ENCODE measurements at regions of chr4 and their contacts with region 1.

Region 1: GRCh38 chr4:73653695-73654106 is 33.5 kb upstream of the RASSF6 start:
- DNase-seq: no peak
- H3K4me3 ChIP-seq: no peak overlapping the region
- H3K27ac ChIP-seq: no peak overlapping the region
- H3K4me1 ChIP-seq: peaks cover 0 to 5% (median 0%) of the 10 kb centered on the region in 4 donors
- H3K27me3 ChIP-seq: no peaks in the 10 kb centered on the region
- CTCF ChIP-seq: peak; percentile 48 to 62 (median 56)
- EP300 ChIP-seq: no peak
- POLR2A ChIP-seq: no peak

Region 2: DNA sequence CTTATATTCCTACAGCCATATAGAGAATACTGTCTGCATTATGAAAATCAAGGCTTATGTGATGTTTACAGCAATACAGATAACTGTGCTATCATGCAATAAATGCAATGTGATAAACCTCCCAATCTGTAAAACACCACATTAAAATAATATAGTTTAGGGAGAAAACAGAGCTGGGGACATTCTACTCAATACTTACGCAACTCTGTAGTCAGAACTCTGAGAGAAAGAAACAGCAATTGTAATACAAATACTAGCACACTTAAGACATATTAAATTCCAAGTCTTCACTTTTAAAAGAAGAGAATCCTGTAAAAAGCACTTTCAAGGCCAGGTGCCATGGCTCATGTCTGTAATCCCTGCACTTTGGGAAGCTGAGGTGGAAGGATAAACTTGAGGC is 456.5 kb before region 1 on chr4:
- intact Hi-C with region 1: no loop called
- DNase-seq: no peak
- H3K4me3 ChIP-seq: no peak overlapping the region
- H3K27ac ChIP-seq: no peak overlapping the region
- H3K4me1 ChIP-seq: peaks cover 0 to 45% (median 31%) of the 10 kb centered on the region in 4 donors
- H3K27me3 ChIP-seq: no peaks in the 10 kb centered on the region
- CTCF ChIP-seq: no peak
- EP300 ChIP-seq: no peak
- POLR2A ChIP-seq: no peak

Region 3: DNA sequence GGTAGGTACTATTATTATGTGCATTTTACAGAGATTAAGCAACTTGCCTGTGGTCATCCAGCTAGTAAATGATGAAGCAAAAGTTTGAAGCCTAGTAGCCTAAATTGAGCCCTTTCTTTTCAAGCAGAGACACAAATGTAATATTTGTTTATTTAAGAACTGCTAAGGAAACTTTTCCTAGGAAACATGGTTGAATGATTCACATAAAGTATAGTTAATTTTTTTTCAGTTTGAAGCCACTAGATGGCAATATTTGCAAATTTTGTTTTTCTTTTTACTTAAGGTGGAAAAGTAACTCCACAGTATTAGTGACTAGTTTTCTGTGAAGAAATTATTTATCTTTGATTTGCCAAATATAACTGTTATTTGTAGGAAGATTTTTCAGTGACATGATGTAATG is 342.3 kb before region 1 on chr4:
- intact Hi-C with region 1: loop called (anchors 10 kb)
- DNase-seq: no peak
- H3K4me3 ChIP-seq: no peak overlapping the region
- H3K27ac ChIP-seq: no peak overlapping the region
- H3K4me1 ChIP-seq: no peaks in the 10 kb centered on the region
- H3K27me3 ChIP-seq: no peaks in the 10 kb centered on the region
- CTCF ChIP-seq: peak; percentile 18 to 42 (median 41)
- EP300 ChIP-seq: no peak
- POLR2A ChIP-seq: no peak

Region 4: DNA sequence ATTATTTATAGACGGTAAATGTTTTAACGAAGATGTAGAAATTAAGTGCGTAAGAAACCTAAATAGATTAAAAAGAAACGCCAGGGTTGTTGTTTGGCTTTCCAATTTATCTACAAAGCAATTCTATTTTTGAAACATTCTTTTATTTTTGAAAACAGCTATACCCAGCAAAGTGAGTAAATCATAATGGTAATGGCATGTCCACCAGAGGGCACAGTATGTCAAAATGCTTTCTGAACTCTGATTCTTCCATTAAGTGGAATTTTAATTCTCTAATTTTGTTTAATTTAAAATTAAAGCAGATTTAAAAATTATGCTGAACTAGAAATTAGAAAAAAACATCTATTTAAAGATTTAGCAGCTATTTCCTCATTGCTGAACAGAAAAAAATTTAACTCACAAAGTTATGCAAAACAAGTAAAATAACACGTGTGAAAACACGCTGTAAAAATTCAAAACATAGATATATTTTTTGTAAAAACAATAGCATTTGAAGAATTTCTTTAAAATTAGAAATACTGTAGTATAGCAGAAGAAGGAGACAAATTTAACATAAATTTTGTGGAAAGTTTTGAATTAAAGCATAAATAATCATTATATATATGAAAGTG is 60.0 kb before region 1 on chr4:
- intact Hi-C with region 1: loop called (anchors 2 kb)
- DNase-seq: no peak
- H3K4me3 ChIP-seq: no peak overlapping the region
- H3K27ac ChIP-seq: no peak overlapping the region
- H3K4me1 ChIP-seq: peaks cover 0 to 16% (median 13%) of the 10 kb centered on the region in 4 donors
- H3K27me3 ChIP-seq: no peaks in the 10 kb centered on the region
- CTCF ChIP-seq: peak; percentile 41 to 60 (median 57)
- EP300 ChIP-seq: no peak
- POLR2A ChIP-seq: no peak

Region 5: GRCh38 chr4:73704314-73705055 is 50.8 kb after region 1 on chr4:
- intact Hi-C with region 1: no loop called
- DNase-seq: no peak
- H3K4me3 ChIP-seq: no peak overlapping the region
- H3K27ac ChIP-seq: peak overlapping the region; percentile 32 to 64 (median 54)
- H3K4me1 ChIP-seq: peaks cover 10 to 21% (median 18%) of the 10 kb centered on the region in 4 donors
- H3K27me3 ChIP-seq: no peaks in the 10 kb centered on the region
- CTCF ChIP-seq: no peak
- EP300 ChIP-seq: no peak
- POLR2A ChIP-seq: no peak